Prostate gland (tissue), 2 donors: ENCODE measurements at regions of chrX and their contacts with region 1.

Region 1: GRCh38 chrX:150649096-150649870 is 43.9 kb upstream of the MTMR1 start:
- DNase-seq: no peak
- H3K4me3 ChIP-seq: no peak overlapping the region
- H3K27ac ChIP-seq: no peak overlapping the region
- H3K4me1 ChIP-seq: no peaks in the 10 kb centered on the region
- H3K27me3 ChIP-seq: no peaks in the 10 kb centered on the region
- CTCF ChIP-seq: no peak
- POLR2A ChIP-seq: no peak

Region 2: DNA sequence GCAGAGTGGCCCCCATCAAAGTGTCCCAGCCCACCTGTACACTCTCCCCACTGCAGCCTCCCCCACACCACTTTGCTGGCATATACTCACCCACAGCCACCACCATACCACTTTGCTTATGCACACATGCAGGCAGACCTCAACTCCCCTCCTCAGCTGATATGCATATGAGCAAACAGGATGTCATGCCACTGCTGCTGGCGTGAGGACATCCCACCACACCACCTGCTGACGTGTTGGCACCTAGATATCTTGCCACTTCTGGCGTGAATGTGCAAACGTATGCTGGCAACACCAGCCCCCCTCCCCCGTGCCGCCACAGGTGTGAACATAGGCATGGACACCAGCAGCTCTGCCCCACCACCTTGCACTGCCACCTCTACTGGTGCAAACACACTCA is 790.7 kb before region 1 on chrX:
- intact Hi-C with region 1: no loop called
- DNase-seq: no peak
- H3K4me3 ChIP-seq: no peak overlapping the region
- H3K27ac ChIP-seq: no peak overlapping the region
- H3K4me1 ChIP-seq: no peaks in the 10 kb centered on the region
- H3K27me3 ChIP-seq: no peaks in the 10 kb centered on the region
- CTCF ChIP-seq: no peak
- POLR2A ChIP-seq: no peak

Region 3: GRCh38 chrX:150438165-150438564 is 211.1 kb before region 1 on chrX:
- intact Hi-C with region 1: no loop called
- DNase-seq: no peak
- H3K4me3 ChIP-seq: no peak overlapping the region
- H3K27ac ChIP-seq: no peak overlapping the region
- H3K4me1 ChIP-seq: no peaks in the 10 kb centered on the region
- H3K27me3 ChIP-seq: no peaks in the 10 kb centered on the region
- CTCF ChIP-seq: no peak
- POLR2A ChIP-seq: no peak

Region 4: DNA sequence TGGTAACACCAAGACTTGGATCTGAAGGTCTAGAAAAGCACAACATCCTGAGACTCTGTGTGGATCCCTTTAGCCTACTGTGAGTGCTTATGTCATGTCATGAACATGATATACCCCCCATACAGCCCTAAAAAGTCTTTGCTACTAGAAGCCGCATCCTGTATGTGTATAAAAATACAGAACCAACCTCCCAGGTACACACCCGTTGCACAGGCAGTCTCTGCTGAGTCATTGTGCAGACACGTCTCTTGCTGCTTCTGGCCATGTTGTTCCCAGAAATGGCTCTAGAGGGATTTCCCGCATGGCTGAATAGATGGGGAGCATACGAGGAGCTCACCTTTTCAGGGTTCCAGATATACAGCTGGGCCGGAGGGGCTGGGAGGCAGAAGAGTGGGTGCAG is 192.8 kb before region 1 on chrX:
- intact Hi-C with region 1: no loop called
- DNase-seq: no peak
- H3K4me3 ChIP-seq: no peak overlapping the region
- H3K27ac ChIP-seq: no peak overlapping the region
- H3K4me1 ChIP-seq: no peaks in the 10 kb centered on the region
- H3K27me3 ChIP-seq: no peaks in the 10 kb centered on the region
- CTCF ChIP-seq: no peak
- POLR2A ChIP-seq: no peak

Region 5: GRCh38 chrX:150575416-150575808 is 73.9 kb before region 1 on chrX:
- intact Hi-C with region 1: loop called (anchors 10 kb)
- DNase-seq: peak; percentile 4
- H3K4me3 ChIP-seq: no peak overlapping the region
- H3K27ac ChIP-seq: no peak overlapping the region
- H3K4me1 ChIP-seq: no peaks in the 10 kb centered on the region
- H3K27me3 ChIP-seq: no peaks in the 10 kb centered on the region
- CTCF ChIP-seq: no peak
- POLR2A ChIP-seq: no peak

Region 6: GRCh38 chrX:150767475-150768131 is 118.3 kb after region 1 on chrX:
- intact Hi-C with region 1: no loop called
- DNase-seq: no peak
- H3K4me3 ChIP-seq: no peak overlapping the region
- H3K27ac ChIP-seq: no peak overlapping the region
- H3K4me1 ChIP-seq: no peaks in the 10 kb centered on the region
- H3K27me3 ChIP-seq: no peaks in the 10 kb centered on the region
- CTCF ChIP-seq: no peak
- POLR2A ChIP-seq: no peak